BJ (cell line): ENCODE measurements at regions of chr12 and their contacts with region 1.

Region 1: GRCh38 chr12:121443193-121443870 is 43.4 kb downstream of the RNF34 start:
- DNase-seq: no peak
- H3K4me3 ChIP-seq: no peak overlapping the region
- H3K27me3 ChIP-seq: no peaks in the 10 kb centered on the region
- CTCF ChIP-seq: peak; percentile 99

Region 2: DNA sequence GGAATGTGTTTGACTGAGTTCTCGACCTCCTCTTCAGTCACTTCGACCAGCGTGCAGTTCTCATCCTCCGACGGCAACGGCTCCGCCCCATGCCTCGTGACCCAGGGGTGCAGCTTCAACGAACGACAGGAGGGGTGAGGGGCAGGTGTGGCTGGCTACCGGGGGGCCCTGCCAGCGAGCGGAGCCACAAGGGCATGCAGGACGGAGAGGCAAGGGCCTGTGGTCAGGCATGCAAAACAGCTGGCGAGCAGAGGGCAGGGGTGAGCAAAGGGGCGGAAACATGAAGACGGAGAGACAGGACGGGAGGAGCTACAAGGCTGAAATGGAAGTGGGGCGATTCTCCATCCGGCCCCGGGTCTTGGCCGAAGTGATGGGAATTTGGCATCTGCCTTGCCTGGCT is 194.7 kb before region 1 on chr12:
- CTCF ChIA-PET with region 1: no interaction called
- POLR2A ChIA-PET with region 1: no interaction called
- DNase-seq: no peak
- H3K4me3 ChIP-seq: no peak overlapping the region
- H3K27me3 ChIP-seq: no peaks in the 10 kb centered on the region
- CTCF ChIP-seq: no peak

Region 3: GRCh38 chr12:121334513-121335343 is 108.6 kb before region 1 on chr12:
- CTCF ChIA-PET with region 1: interaction called, 127 read pairs
- POLR2A ChIA-PET with region 1: no interaction called
- DNase-seq: peak; percentile 11
- H3K4me3 ChIP-seq: no peak overlapping the region
- H3K27me3 ChIP-seq: no peaks in the 10 kb centered on the region
- CTCF ChIP-seq: peak; percentile 88

Region 4: DNA sequence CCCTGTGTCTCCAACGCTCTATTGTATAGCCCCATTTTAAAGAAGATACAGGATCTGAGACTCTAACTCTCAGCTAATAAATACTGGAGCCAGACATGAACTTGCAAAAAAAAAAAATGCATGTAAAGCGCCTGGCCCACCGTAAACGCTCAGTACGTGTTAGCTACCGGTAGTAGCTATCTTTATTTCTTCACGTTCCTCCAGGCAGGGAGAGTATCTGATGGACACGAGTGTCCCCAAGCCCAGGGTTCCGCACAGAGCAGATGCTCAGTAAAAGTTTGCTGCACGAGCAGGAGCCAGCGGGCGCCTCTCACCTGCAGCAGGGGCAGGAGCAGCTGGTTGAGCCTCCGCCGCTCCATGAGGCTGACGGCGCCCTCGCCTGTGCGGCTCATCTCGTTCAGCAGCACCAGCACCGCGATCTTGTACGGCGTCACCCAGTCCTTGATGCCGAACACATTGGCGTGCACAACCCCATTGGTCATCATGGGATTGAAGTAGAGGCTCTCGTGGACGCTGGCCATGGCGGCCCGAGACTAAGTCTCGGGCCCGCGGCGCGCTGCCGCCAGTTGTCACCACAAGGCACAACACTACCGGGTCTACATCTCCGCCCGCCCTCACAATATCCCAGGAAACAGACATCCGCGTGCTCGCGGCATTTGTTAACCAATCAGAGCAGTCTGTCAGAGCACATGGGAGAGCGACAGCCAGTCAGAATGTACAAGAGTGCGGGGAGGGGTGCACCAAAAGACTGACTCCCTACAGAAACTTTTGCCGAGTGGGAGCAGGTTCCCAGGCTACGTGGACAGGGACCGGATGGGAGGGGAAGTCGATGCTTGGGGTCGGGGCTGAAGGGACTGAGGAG is 91.3 kb before region 1 on chr12 and contains the start of gene ANAPC5:
- CTCF ChIA-PET with region 1: interaction called, 12 read pairs
- POLR2A ChIA-PET with region 1: interaction called, 7 read pairs
- DNase-seq: peak; percentile 97
- H3K4me3 ChIP-seq: peak within 1 kb of the TSS; percentile 91
- H3K27me3 ChIP-seq: no peaks in the 10 kb centered on the region
- CTCF ChIP-seq: no peak
- polyA plus RNA-seq, gene ANAPC5: 159 and 194 TPM in 2 replicates

Region 5: DNA sequence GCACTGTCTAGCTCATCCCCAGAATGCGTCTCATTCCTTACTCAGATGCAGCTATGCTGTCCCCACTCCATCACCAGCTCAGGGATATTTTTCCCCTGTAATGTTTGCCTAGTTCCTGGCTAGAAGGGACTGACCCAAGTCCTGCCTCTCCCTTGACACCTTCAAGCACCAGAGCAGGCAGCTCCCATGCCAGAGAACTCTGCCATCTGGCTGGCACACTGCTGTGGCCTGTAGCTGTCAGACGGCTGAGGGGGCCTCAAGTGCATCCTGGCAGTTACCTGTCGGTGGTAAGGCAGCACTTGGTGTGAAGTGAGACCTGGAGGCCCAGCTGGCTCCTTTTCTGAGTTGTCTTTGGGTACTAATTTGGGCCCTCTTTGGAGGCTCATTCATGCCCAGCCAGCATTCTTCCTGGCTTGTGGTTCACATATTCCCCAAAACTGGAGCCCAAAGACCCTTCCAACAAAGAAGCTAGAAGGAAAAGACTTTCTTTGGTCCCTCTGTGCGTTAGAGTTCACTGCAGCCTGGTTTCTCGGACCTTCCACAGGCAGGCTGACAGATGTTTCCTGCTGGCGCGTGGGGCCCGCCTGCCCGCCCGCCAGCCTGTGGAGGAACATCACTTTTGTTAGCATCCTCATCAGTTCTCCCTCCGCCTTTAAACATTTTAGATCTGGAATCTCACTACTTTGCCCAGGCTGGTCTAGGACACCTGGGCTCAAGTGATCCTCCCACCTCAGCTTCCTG is 10.4 kb before region 1 on chr12:
- CTCF ChIA-PET with region 1: interaction called, 42 read pairs
- POLR2A ChIA-PET with region 1: no interaction called
- DNase-seq: no peak
- H3K4me3 ChIP-seq: no peak overlapping the region
- H3K27me3 ChIP-seq: no peaks in the 10 kb centered on the region
- CTCF ChIP-seq: no peak